ENCODE measurements at regions of chr4 and their contacts with region 1.

Region 1: GRCh38 chr4:6873792-6874461 is 35.7 kb upstream of the TBC1D14 start:
- DNase-seq: peak; percentile 70 to 80 (median 72)
- H3K4me3 ChIP-seq: no peak overlapping the region
- H3K4me3 Mint-ChIP-seq: no peak overlapping the region
- H3K27ac ChIP-seq: no peak overlapping the region
- H3K27ac Mint-ChIP-seq: peak overlapping the region in 5 of 7 donors; percentile 32 to 76 (median 52)
- H3K4me1 ChIP-seq: no peaks in the 10 kb centered on the region
- H3K4me1 Mint-ChIP-seq: peaks cover 0 to 6% (median 2%) of the 10 kb centered on the region in 4 donors
- H3K27me3 ChIP-seq: no peaks in the 10 kb centered on the region
- H3K27me3 Mint-ChIP-seq: no peaks in the 10 kb centered on the region

Region 2: DNA sequence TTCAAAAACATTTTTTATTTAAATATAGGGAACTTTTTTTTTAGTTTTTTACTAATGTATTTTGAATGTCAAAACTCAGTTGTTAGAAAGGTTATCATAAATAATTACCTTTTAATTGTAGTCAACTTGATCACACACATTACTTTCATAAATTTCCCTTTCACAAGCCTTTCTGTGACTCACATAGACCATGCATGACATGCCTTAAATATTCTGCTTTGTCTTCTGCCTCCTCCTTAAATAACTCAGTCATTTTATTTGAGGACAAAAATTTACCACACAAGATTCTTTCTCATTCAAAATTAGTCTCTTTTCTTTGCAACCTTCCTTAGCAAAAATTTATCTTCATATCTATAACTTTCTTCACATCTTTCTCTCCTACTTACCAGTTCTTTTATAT is 1385.5 kb before region 1 on chr4:
- CTCF ChIA-PET with region 1: no interaction called
- POLR2A ChIA-PET with region 1: no interaction called
- intact Hi-C with region 1: no loop called
- DNase-seq: no peak
- H3K4me3 ChIP-seq: no peak overlapping the region
- H3K4me3 Mint-ChIP-seq: no peak overlapping the region
- H3K27ac ChIP-seq: no peak overlapping the region
- H3K27ac Mint-ChIP-seq: no peak overlapping the region
- H3K4me1 ChIP-seq: no peaks in the 10 kb centered on the region
- H3K4me1 Mint-ChIP-seq: no peaks in the 10 kb centered on the region
- H3K27me3 ChIP-seq: no peaks in the 10 kb centered on the region
- H3K27me3 Mint-ChIP-seq: no peaks in the 10 kb centered on the region

Region 3: GRCh38 chr4:6327041-6327917 is 546.6 kb before region 1 on chr4:
- CTCF ChIA-PET with region 1: interaction called, 5 read pairs
- POLR2A ChIA-PET with region 1: no interaction called
- intact Hi-C with region 1: loop called (anchors 5 kb)
- DNase-seq: peak; percentile 68 to 74 (median 70)
- H3K4me3 ChIP-seq: no peak overlapping the region
- H3K4me3 Mint-ChIP-seq: no peak overlapping the region
- H3K27ac ChIP-seq: no peak overlapping the region
- H3K27ac Mint-ChIP-seq: no peak overlapping the region
- H3K4me1 ChIP-seq: no peaks in the 10 kb centered on the region
- H3K4me1 Mint-ChIP-seq: peaks cover 0 to 3% (median 0%) of the 10 kb centered on the region in 4 donors
- H3K27me3 ChIP-seq: peaks cover 10% of the 10 kb centered on the region
- H3K27me3 Mint-ChIP-seq: peaks cover 9 to 10% of the 10 kb centered on the region in 2 donors

Region 4: DNA sequence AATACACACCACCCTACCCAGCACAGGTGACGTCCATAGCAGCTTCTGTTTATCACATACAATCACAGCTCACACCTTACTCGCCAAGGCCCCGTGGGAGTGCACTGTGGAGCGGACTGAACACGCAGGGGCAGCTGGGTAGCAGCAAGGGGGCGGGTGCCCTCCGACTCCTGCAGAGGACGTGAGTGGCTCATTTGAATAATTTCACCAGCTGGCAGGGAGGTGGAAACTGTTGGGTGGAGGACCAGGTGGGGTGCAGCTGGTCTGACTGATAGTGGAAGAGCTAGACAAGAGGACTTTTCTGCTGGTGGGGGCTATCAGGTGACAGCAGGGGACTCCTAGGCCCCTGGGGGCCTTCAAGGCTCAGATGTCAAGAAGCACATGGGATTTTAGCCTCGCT is 282.6 kb before region 1 on chr4:
- CTCF ChIA-PET with region 1: no interaction called
- POLR2A ChIA-PET with region 1: no interaction called
- intact Hi-C with region 1: no loop called
- DNase-seq: no peak
- H3K4me3 ChIP-seq: no peak overlapping the region
- H3K4me3 Mint-ChIP-seq: no peak overlapping the region
- H3K27ac ChIP-seq: no peak overlapping the region
- H3K27ac Mint-ChIP-seq: peak overlapping the region in 1 of 7 donors; percentile 18
- H3K4me1 ChIP-seq: no peaks in the 10 kb centered on the region
- H3K4me1 Mint-ChIP-seq: no peaks in the 10 kb centered on the region
- H3K27me3 ChIP-seq: no peaks in the 10 kb centered on the region
- H3K27me3 Mint-ChIP-seq: no peaks in the 10 kb centered on the region

Region 5: GRCh38 chr4:6663596-6664393 is 210.1 kb before region 1 on chr4:
- CTCF ChIA-PET with region 1: interaction called, 19 read pairs
- POLR2A ChIA-PET with region 1: no interaction called
- intact Hi-C with region 1: no loop called
- DNase-seq: no peak
- H3K4me3 ChIP-seq: peak overlapping the region in 1 of 2 donors; percentile 19
- H3K4me3 Mint-ChIP-seq: peak overlapping the region in 6 of 8 donors; percentile 6 to 72 (median 45)
- H3K27ac ChIP-seq: no peak overlapping the region
- H3K27ac Mint-ChIP-seq: no peak overlapping the region
- H3K4me1 ChIP-seq: peaks cover 19% of the 10 kb centered on the region
- H3K4me1 Mint-ChIP-seq: peaks cover 0 to 15% (median 7%) of the 10 kb centered on the region in 4 donors
- H3K27me3 ChIP-seq: no peaks in the 10 kb centered on the region
- H3K27me3 Mint-ChIP-seq: no peaks in the 10 kb centered on the region

Region 6: DNA sequence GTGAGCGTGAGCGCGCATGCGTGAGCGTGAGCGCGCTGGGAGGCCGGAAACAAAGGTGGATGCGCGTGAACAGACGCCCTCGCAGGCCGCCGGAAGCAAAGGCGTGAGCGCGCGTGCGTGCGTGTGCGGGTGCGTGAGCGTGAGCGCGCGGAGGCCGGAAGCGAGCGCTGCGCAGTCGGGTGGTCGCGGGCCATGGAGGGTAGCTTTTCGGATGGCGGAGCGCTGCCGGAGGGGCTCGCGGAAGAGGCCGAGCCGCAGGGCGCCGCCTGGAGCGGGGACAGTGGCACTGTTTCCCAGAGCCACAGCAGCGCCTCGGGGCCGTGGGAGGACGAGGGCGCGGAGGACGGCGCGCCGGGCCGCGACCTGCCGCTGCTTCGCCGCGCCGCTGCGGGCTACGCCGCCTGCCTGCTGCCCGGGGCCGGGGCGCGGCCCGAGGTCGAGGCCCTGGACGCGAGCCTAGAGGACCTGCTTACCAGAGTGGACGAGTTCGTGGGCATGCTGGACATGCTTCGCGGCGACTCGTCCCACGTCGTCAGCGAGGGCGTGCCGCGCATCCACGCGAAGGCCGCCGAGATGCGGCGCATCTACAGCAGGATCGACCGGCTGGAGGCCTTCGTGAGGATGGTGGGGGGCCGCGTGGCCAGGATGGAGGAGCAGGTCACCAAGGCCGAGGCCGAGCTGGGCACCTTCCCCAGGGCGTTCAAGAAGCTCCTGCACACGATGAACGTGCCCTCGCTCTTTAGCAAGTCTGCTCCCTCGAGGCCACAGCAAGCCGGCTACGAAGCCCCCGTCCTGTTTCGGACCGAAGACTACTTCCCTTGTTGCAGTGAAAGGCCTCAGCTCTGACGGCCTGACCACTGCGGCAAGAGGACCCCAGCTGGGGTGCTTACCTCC is 157.7 kb before region 1 on chr4 and contains the start of gene BLOC1S4:
- CTCF ChIA-PET with region 1: interaction called, 293 read pairs
- POLR2A ChIA-PET with region 1: interaction called, 30 read pairs
- intact Hi-C with region 1: loop called (anchors 1 kb)
- DNase-seq: peak; percentile 86 to 94 (median 93)
- H3K4me3 ChIP-seq: peak within 1 kb of the TSS; percentile 38 to 84
- H3K4me3 Mint-ChIP-seq: peak within 1 kb of the TSS; percentile 87 to 99 (median 93)
- H3K27ac ChIP-seq: peak within 1 kb of the TSS; percentile 92
- H3K27ac Mint-ChIP-seq: peak within 1 kb of the TSS; percentile 92 to 99 (median 98)
- H3K4me1 ChIP-seq: peaks cover 38% of the 10 kb centered on the region
- H3K4me1 Mint-ChIP-seq: peaks cover 25 to 48% (median 35%) of the 10 kb centered on the region in 4 donors
- H3K27me3 ChIP-seq: no peaks in the 10 kb centered on the region
- H3K27me3 Mint-ChIP-seq: no peaks in the 10 kb centered on the region
- total RNA-seq, gene BLOC1S4: 35.3 to 37.8 TPM

Region 7: GRCh38 chr4:6742989-6743388 is 130.9 kb before region 1 on chr4:
- CTCF ChIA-PET with region 1: no interaction called
- POLR2A ChIA-PET with region 1: no interaction called
- intact Hi-C with region 1: no loop called
- DNase-seq: no peak
- H3K4me3 ChIP-seq: no peak overlapping the region
- H3K4me3 Mint-ChIP-seq: no peak overlapping the region
- H3K27ac ChIP-seq: no peak overlapping the region
- H3K27ac Mint-ChIP-seq: no peak overlapping the region
- H3K4me1 ChIP-seq: no peaks in the 10 kb centered on the region
- H3K4me1 Mint-ChIP-seq: peaks cover 0 to 5% (median under 1%) of the 10 kb centered on the region in 4 donors
- H3K27me3 ChIP-seq: no peaks in the 10 kb centered on the region
- H3K27me3 Mint-ChIP-seq: peaks cover 0 to 2% of the 10 kb centered on the region in 2 donors

Region 8: GRCh38 chr4:6777636-6778281 is 96.2 kb before region 1 on chr4:
- CTCF ChIA-PET with region 1: interaction called, 39 read pairs
- POLR2A ChIA-PET with region 1: interaction called, 10 read pairs
- intact Hi-C with region 1: loop called (anchors 5 kb)
- DNase-seq: no peak
- H3K4me3 ChIP-seq: no peak overlapping the region
- H3K4me3 Mint-ChIP-seq: peak overlapping the region in 4 of 8 donors; percentile 24 to 71 (median 44)
- H3K27ac ChIP-seq: no peak overlapping the region
- H3K27ac Mint-ChIP-seq: peak overlapping the region in 6 of 7 donors; percentile 48 to 92 (median 62)
- H3K4me1 ChIP-seq: peaks cover 28% of the 10 kb centered on the region
- H3K4me1 Mint-ChIP-seq: peaks cover 12 to 48% (median 27%) of the 10 kb centered on the region in 4 donors
- H3K27me3 ChIP-seq: no peaks in the 10 kb centered on the region
- H3K27me3 Mint-ChIP-seq: no peaks in the 10 kb centered on the region

Region 9: DNA sequence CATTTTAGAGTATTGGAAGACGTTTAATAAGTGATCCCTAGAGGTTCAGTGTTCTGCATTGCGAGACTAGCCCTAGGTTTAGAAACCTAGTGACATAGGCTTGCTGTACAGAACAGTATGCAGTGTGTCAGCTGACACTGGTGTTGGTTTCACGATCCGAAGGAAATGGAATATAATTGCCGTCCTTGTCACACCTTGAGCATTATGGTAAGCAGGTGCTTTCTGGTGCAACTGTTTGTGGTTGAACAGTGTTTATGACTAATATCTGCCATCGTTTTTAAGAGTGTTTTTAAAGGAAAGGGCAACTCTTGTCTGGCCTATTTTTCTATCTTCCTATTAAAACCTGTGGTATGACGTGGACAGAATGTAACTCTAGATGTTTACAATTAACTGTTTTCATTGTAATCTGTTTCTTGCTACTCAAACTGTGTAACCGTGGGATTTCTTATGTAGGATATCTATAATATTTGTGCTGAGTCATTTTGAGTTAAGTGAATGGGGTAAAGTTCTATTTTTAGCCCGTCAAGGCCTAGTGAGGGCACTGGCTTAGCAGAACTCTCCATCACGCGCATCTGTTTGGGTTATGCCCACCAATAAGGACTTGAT is 18.1 kb before region 1 on chr4:
- CTCF ChIA-PET with region 1: interaction called, 18 read pairs
- POLR2A ChIA-PET with region 1: no interaction called
- intact Hi-C with region 1: no loop called
- DNase-seq: peak; percentile 38 to 84 (median 52)
- H3K4me3 ChIP-seq: no peak overlapping the region
- H3K4me3 Mint-ChIP-seq: peak overlapping the region in 5 of 8 donors; percentile 1 to 30 (median 9)
- H3K27ac ChIP-seq: no peak overlapping the region
- H3K27ac Mint-ChIP-seq: peak overlapping the region; percentile 19 to 86 (median 71)
- H3K4me1 ChIP-seq: peaks cover 25% of the 10 kb centered on the region
- H3K4me1 Mint-ChIP-seq: peaks cover 15 to 45% (median 26%) of the 10 kb centered on the region in 4 donors
- H3K27me3 ChIP-seq: no peaks in the 10 kb centered on the region
- H3K27me3 Mint-ChIP-seq: no peaks in the 10 kb centered on the region

Region 10: DNA sequence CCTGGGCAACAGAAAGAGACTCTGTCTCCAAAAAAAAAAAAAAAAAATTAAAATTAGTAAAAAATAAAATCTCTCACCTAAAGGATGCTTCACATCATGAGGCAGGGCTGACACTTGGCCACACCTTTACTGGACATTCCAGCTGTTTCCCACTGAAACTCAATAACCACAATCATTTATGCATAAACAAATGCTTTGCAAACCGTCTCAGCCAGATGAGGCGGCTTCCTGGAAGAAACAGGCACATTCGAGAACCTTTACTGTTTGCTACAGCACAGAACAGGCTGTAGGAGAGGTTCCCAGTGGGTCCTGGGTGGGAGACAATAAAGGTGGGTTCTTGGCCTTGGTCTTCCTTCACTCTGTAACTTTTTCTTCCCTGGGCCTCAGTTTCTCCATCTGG is 24.8 kb after region 1 on chr4:
- CTCF ChIA-PET with region 1: interaction called, 10 read pairs
- POLR2A ChIA-PET with region 1: no interaction called
- intact Hi-C with region 1: no loop called
- DNase-seq: no peak
- H3K4me3 ChIP-seq: no peak overlapping the region
- H3K4me3 Mint-ChIP-seq: peak overlapping the region in 7 of 8 donors; percentile 18 to 78 (median 67)
- H3K27ac ChIP-seq: no peak overlapping the region
- H3K27ac Mint-ChIP-seq: peak overlapping the region; percentile 82 to 93 (median 88)
- H3K4me1 ChIP-seq: peaks cover 30% of the 10 kb centered on the region
- H3K4me1 Mint-ChIP-seq: peaks cover 13 to 37% (median 24%) of the 10 kb centered on the region in 4 donors
- H3K27me3 ChIP-seq: no peaks in the 10 kb centered on the region
- H3K27me3 Mint-ChIP-seq: no peaks in the 10 kb centered on the region